Activated CD8-positive, alpha-beta T cell treated with anti-CD3 and anti-CD28 coated beads for 36 hours (primary cell): ENCODE measurements at regions of chr4 and their contacts with region 1.

Region 1: DNA sequence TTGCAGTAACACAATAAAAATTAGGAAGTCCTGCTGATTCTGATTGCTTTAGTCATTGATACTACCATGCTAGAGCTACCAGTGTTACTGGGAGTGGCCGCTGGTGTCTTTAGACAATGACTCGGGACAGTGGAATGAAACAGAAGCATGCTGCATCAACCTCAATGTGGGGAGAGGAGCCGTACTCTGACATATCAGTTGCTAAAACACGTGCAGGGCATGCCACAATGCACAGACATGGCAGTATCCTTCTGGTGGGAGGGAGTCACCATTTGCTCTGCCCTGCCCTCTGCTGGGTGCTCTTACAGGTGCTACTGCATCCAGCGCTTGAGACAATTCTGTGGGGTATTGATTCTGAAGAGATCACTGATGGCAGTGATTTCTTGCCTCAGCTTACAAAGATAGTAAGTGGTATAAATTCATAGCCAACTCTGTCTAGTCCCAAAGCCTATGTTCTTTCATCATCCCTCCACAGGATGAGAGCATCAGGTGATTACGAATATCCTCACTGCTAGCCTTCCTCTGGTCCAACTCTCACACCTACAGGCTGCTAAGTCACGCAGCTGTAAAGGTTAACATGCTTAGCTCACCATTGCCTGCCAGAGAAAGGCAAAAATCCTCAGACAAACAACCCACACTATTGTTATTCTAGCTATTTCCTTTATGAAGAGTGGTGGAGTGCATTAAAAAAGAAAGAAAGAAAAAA is 43.7 kb downstream of the NSG1 start:
- DNase-seq: peak; percentile 80
- ATAC-seq: peak; percentile 99
- H3K4me3 Mint-ChIP-seq: no peak overlapping the region
- H3K27ac Mint-ChIP-seq: no peak overlapping the region
- H3K4me1 Mint-ChIP-seq: peaks cover 7% of the 10 kb centered on the region
- H3K27me3 Mint-ChIP-seq: no peaks in the 10 kb centered on the region
- CTCF ChIP-seq: peak; percentile 73

Region 2: DNA sequence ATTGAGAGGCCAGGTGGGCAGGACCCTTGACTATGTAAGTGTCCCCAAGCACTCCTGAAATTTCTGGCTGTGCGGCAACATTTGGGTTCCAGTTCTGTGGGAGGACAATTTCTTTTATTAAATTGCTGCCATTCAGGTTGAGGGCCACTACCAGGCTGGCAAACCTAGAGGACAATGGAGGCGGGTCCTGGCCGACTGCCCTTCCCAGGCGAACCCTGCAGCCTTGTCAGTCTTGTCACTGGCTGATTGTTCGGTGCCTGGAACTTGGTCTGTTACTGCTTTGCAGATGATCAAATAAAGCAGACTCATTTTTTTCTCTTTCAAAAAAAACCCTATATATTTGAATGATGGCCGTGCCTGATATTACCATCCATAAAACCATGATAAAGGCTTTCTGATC is 176.0 kb before region 1 on chr4:
- CTCF ChIA-PET with region 1: interaction called, 19 read pairs
- POLR2A ChIA-PET with region 1: no interaction called
- intact Hi-C with region 1: loop called (anchors 5 kb)
- DNase-seq: no peak
- ATAC-seq: no peak
- H3K4me3 Mint-ChIP-seq: no peak overlapping the region
- H3K27ac Mint-ChIP-seq: no peak overlapping the region
- H3K4me1 Mint-ChIP-seq: no peaks in the 10 kb centered on the region
- H3K27me3 Mint-ChIP-seq: no peaks in the 10 kb centered on the region
- CTCF ChIP-seq: no peak

Region 3: GRCh38 chr4:4386736-4387392 is 43.8 kb before region 1 on chr4 and contains the start of gene NSG1:
- CTCF ChIA-PET with region 1: interaction called, 13 read pairs
- POLR2A ChIA-PET with region 1: no interaction called
- intact Hi-C with region 1: loop called (anchors 1 kb)
- DNase-seq: peak; percentile 58
- ATAC-seq: peak; percentile 55
- H3K4me3 Mint-ChIP-seq: peak within 1 kb of the TSS; percentile 76
- H3K27ac Mint-ChIP-seq: no peak within 1 kb of the TSS
- H3K4me1 Mint-ChIP-seq: peaks cover 12% of the 10 kb centered on the region
- H3K27me3 Mint-ChIP-seq: peaks cover 11% of the 10 kb centered on the region
- CTCF ChIP-seq: no peak
- total RNA-seq, gene NSG1: 5.6 to 6.6 TPM

Region 4: DNA sequence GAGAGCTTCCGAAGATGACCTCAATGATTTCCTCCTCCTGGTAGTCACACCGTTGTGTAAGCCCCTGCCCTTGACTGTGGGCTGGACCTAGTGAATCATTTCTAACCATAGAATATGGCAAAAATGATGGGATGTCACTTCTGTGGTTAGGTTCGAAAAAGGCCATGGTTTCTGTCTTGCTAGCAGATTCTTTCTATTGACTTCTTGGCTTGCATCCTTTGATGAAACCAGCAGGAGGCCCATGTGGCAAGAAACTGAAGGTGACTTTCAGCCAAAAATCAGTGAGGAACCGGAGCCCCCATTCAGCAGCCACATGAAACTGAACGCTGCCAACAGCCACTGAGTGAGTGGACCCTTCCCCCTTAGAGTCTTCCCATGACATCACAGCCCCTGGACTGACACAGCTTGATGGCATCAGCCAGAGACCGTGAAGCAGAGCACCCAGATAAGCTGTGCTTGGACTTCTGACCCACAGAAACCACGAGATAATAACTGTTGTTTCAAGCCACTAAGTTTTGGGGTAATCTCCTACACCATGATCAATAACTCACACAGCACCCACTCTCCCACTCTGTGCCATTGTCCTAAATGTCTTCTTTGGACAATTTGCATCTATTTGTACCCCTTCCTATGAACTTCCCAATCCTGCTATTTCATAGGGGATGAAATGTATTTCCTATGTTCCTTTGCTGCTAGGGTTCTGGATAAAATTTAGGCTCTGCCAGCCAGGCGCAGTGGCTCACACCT is 259.2 kb after region 1 on chr4:
- CTCF ChIA-PET with region 1: no interaction called
- POLR2A ChIA-PET with region 1: no interaction called
- intact Hi-C with region 1: no loop called
- DNase-seq: peak; percentile 30
- ATAC-seq: peak; percentile 73
- H3K4me3 Mint-ChIP-seq: no peak overlapping the region
- H3K27ac Mint-ChIP-seq: peak overlapping the region; percentile 50
- H3K4me1 Mint-ChIP-seq: peaks cover 14% of the 10 kb centered on the region
- H3K27me3 Mint-ChIP-seq: no peaks in the 10 kb centered on the region
- CTCF ChIP-seq: no peak